PC-3 (cell line): ENCODE measurements at regions of chr15 and their contacts with region 1.

Region 1: GRCh38 chr15:57375827-57376695 is at the start of gene CGNL1:
- DNase-seq: peak; percentile 15
- ATAC-seq: peak; percentile 60
- H3K4me3 ChIP-seq: peak within 1 kb of the TSS; percentile 75
- H3K27ac ChIP-seq: no peak within 1 kb of the TSS
- H3K4me1 ChIP-seq: 0 out of 2 replicates have a peak, but pooled peaks cover 7% of the 10 kb centered on the region
- H3K27me3 ChIP-seq: no peaks in the 10 kb centered on the region
- CTCF ChIP-seq: no peak
- total RNA-seq, gene CGNL1: 0.66 and 0.86 TPM in 2 replicates

Region 2: DNA sequence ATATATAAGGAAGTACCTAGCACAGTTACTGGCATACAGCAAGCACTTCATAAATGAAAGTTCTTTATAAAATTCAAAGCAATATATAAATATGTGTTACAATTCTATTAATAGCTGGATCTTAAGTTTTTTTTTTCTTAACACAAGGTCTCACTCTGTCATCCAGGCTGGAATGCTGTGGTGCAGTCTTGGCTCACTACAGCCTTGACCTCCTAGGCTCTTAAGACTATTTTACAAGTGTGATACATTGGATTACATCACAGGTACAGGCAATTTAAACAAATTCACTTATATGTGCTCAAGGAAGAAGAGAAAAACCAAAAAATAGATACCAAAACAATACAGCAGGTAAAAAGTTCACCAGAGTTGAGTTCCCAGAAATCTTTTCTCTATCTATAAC is 703.3 kb before region 1 on chr15:
- CTCF ChIA-PET with region 1: no interaction called
- POLR2A ChIA-PET with region 1: interaction called, 18 read pairs
- intact Hi-C with region 1: no loop called
- DNase-seq: no peak
- ATAC-seq: no peak
- H3K4me3 ChIP-seq: no peak overlapping the region
- H3K27ac ChIP-seq: no peak overlapping the region
- H3K4me1 ChIP-seq: no peaks in the 10 kb centered on the region
- H3K27me3 ChIP-seq: no peaks in the 10 kb centered on the region
- CTCF ChIP-seq: no peak

Region 3: GRCh38 chr15:57406062-57406772 is 30.2 kb after region 1 on chr15:
- CTCF ChIA-PET with region 1: no interaction called
- POLR2A ChIA-PET with region 1: no interaction called
- intact Hi-C with region 1: no loop called
- DNase-seq: no peak
- ATAC-seq: no peak
- H3K4me3 ChIP-seq: no peak overlapping the region
- H3K27ac ChIP-seq: no peak overlapping the region
- H3K4me1 ChIP-seq: no peaks in the 10 kb centered on the region
- H3K27me3 ChIP-seq: no peaks in the 10 kb centered on the region
- CTCF ChIP-seq: no peak

Region 4: DNA sequence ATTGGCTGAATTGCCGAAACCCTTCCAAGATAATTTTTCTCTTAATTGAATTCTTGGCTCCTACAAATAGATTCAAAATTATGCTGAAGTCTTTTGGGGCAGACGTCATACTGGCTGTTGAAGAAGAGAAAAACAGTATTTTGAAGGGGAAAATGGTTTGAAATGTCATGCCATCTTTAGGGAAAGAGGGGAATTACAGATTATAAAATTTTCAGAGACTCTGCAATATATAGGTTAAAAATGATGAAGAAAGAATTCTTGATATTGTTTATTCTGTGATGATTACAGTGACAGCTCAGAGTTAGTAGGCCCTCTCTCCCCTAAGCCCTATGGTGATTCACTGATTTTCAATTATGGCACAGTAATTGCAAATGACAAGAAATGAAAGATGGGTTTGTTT is 86.3 kb after region 1 on chr15:
- CTCF ChIA-PET with region 1: no interaction called
- POLR2A ChIA-PET with region 1: no interaction called
- intact Hi-C with region 1: loop called (anchors 5 kb)
- DNase-seq: peak; percentile 81
- ATAC-seq: peak; percentile 99
- H3K4me3 ChIP-seq: no peak overlapping the region
- H3K27ac ChIP-seq: peak overlapping the region; percentile 80; the same call in 1 of the 2 replicates
- H3K4me1 ChIP-seq: peaks cover 21% of the 10 kb centered on the region
- H3K27me3 ChIP-seq: no peaks in the 10 kb centered on the region
- CTCF ChIP-seq: peak; percentile 54; the same call in 1 of the 2 replicates